ENCODE measurements at regions of chr21 and their contacts with region 1.

Region 1: GRCh38 chr21:33189237-33189636 is 40.5 kb upstream of the IFNAR2 start:
- DNase-seq: no peak
- ATAC-seq: no peak

Region 2: GRCh38 chr21:32994305-32994704 is 194.9 kb before region 1 on chr21:
- intact Hi-C with region 1: loop called (anchors 2 kb)
- DNase-seq: no peak
- ATAC-seq: no peak

Region 3: DNA sequence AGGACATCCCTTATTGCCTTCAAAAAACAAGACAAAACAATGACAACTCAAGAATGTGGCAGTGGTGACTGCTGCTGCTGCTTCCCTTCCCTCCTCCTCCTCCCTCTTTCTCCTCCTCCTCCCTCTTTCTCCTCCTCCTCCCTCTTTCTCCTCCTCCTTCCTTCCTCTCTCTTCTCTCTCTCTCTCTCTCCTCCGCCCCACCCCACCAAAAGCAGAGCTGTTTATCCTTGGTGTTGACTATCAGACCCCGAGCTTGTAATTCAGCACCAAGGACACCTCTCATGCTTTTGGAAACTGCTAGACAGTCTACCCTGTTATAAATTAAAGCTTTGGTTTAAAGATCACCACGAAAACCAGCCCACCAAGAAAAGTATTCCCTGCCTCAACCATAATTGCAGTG is 31.9 kb before region 1 on chr21:
- intact Hi-C with region 1: no loop called
- DNase-seq: no peak
- ATAC-seq: no peak